Activated T-helper 1 cell treated with anti-CD3 and anti-CD28 coated beads, Interleukin-12 subunit alpha, Interleukin-12 subunit beta, Interleukin-2, Interleukin-4 antibody, amounts not matched to agents 30 ng/mL and 10 ng/mL and 1 ng/mL, durations not matched to agents 14 hours and 24 hours and 36 hours (primary cell): ENCODE measurements at regions of chr9 and their contacts with region 1.

Region 1: DNA sequence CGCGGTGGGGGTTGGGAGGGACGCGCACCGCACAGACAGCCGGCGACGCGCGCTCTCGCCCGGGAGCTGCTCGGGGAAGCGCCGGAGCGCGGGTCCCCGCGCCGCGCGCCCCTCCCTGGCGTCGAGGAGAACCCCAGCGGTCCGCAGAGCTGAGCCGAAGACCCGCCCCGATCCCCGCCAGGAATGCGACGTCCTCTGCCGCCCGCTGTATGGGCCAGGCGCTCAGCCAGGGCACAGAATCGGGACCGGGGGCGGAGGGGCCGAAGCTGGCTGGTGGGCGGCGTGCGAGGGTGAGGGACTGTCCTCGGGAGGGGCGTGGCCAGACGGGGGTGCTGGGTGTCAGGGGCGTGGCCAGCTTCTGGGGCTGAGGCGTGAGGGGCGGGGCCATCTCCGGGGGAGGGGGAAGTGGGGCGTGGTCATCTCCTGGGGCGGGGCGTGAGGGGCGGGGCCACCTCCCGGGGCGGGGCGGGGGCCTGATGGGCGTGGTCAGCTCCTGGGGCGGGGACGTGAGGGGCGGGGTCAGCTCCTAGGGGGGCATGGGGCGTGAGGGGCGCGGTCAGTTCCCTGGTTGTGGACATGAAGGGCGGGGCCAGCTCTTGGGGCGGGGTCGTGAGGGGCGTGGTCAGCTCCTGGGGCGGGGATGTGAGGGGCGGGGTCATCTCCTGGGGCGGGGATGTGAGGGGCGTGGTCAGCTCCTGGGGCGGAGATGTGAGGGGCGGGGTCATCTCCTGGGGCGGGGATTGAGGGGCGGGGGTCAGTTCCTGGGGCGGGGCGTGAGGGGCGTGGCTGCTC is 965 bp downstream of the PTGDS start:
- DNase-seq: peak; percentile 69
- H3K4me3 Mint-ChIP-seq: no peak overlapping the region
- H3K27ac Mint-ChIP-seq: no peak overlapping the region
- H3K4me1 Mint-ChIP-seq: peaks cover 6% of the 10 kb centered on the region
- H3K27me3 Mint-ChIP-seq: peaks cover 9% of the 10 kb centered on the region

Region 2: DNA sequence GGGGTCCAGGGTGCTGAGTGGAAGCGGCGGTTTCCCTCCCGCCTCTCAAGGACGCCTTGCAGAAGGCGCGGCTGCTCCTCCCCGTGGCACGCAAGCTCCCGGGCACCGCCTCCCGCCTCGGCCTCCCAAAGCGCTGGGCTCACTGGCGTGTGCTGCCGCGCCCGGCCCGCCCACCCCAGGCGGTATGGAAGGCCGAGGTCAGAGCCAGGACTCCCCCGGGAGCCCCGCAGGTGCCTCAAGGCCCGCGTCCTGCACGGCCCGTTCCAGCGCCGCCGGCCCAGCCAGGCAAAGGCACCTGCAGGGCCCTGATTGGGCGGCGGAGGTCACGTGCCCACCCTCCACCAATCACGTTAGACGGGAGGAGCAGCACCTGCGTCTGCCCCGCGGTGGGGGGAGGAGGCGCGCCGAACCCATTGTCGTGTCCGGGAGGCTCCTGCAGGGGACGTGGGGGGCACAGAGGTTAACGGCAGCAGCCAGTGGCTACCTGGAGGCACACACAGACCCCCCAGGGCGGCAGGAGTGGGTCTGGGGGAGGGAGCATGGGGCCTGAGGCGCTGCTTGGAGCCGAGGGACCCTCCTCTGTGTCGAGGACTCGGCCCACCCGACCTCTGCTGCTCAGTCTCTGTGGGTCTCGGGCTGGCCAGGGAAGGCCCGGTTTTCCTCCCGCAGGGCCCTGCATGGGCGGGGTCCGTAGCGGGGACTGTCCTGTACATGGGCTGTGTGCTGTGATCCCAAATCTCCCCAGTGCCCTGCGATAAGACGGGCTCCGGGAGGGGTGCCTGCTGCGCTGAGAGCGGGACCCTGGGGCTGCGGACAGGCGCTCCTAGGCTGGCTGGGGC is 28.2 kb before region 1 on chr9:
- intact Hi-C with region 1: loop called (anchors 1 kb)
- DNase-seq: peak; percentile 94
- H3K4me3 Mint-ChIP-seq: peak overlapping the region; percentile 84
- H3K27ac Mint-ChIP-seq: peak overlapping the region; percentile 83
- H3K4me1 Mint-ChIP-seq: no peaks in the 10 kb centered on the region
- H3K27me3 Mint-ChIP-seq: no peaks in the 10 kb centered on the region

Region 3: GRCh38 chr9:137021979-137022619 is 43.8 kb after region 1 on chr9:
- intact Hi-C with region 1: loop called (anchors 1 kb)
- DNase-seq: peak; percentile 64
- H3K4me3 Mint-ChIP-seq: no peak overlapping the region
- H3K27ac Mint-ChIP-seq: peak overlapping the region; percentile 29
- H3K4me1 Mint-ChIP-seq: no peaks in the 10 kb centered on the region
- H3K27me3 Mint-ChIP-seq: no peaks in the 10 kb centered on the region

Region 4: GRCh38 chr9:137150617-137151457 is 172.6 kb after region 1 on chr9:
- intact Hi-C with region 1: loop called (anchors 2 kb)
- DNase-seq: peak; percentile 60
- H3K4me3 Mint-ChIP-seq: no peak overlapping the region
- H3K27ac Mint-ChIP-seq: no peak overlapping the region
- H3K4me1 Mint-ChIP-seq: peaks cover 4% of the 10 kb centered on the region
- H3K27me3 Mint-ChIP-seq: peaks cover 2% of the 10 kb centered on the region